Activated CD4-positive, alpha-beta T cell treated with anti-CD3 and anti-CD28 coated beads for 36 hours (primary cell): ENCODE measurements at regions of chr20 and their contacts with region 1.

Region 1: DNA sequence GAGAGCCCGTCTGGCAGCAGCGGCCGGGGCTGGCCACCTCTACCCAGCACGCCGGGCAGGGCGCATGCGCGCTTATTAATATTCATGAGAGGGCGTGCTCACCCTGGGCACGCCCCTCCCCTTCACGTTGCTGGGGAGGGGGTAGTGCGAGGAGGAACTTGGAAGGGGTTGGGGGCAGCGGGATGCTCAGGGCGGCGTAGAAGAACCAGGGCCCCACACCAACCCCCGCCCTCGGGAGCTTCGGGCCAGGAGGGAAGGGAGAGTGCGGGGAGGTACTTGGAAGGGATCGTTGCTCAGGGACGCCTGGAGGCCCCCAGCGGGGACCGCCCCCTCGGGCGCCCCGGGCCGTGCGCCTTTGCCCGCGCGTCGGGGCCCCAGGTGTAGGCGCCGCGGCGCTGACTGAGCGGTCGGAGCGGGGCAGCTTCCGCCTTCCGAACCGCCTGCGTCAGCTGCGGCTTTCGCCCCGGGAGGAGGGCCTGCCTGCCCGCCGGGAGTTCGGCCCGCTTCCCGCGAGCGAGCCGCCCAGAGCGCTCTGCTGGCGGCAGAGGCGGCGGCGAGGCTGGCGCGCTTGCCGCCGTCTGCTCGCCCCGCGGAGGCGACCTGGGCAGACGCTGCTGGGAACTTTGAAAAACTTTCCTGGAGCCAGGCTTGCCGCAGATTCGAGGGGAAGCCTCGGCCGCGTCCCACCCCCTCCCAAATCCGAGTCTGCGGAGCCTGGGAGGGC is at the start of gene JAG1:
- DNase-seq: peak; percentile 86
- ATAC-seq: peak; percentile 78
- H3K4me3 Mint-ChIP-seq: peak within 1 kb of the TSS; percentile 71
- H3K27ac Mint-ChIP-seq: no peak within 1 kb of the TSS
- H3K4me1 Mint-ChIP-seq: peaks cover 21% of the 10 kb centered on the region
- H3K27me3 Mint-ChIP-seq: peaks cover 61% of the 10 kb centered on the region
- total RNA-seq, gene JAG1: 0.30 to 0.44 TPM

Region 2: GRCh38 chr20:10434832-10435812 is 239.0 kb before region 1 on chr20 and contains the start of gene SLX4IP:
- CTCF ChIA-PET with region 1: interaction called, 4 read pairs
- POLR2A ChIA-PET with region 1: no interaction called
- intact Hi-C with region 1: loop called (anchors 1 to 2 kb)
- DNase-seq: peak; percentile 88
- ATAC-seq: peak; percentile 68
- H3K4me3 Mint-ChIP-seq: peak within 1 kb of the TSS; percentile 78
- H3K27ac Mint-ChIP-seq: peak within 1 kb of the TSS; percentile 87
- H3K4me1 Mint-ChIP-seq: peaks cover 39% of the 10 kb centered on the region
- H3K27me3 Mint-ChIP-seq: no peaks in the 10 kb centered on the region
- total RNA-seq, gene SLX4IP: 7.4 to 7.8 TPM

Region 3: GRCh38 chr20:10553326-10553984 is 120.7 kb before region 1 on chr20:
- CTCF ChIA-PET with region 1: no interaction called
- POLR2A ChIA-PET with region 1: no interaction called
- intact Hi-C with region 1: loop called (anchors 2 to 5 kb)
- DNase-seq: peak; percentile 70
- ATAC-seq: peak; percentile 45
- H3K4me3 Mint-ChIP-seq: no peak overlapping the region
- H3K27ac Mint-ChIP-seq: no peak overlapping the region
- H3K4me1 Mint-ChIP-seq: peaks cover 38% of the 10 kb centered on the region
- H3K27me3 Mint-ChIP-seq: no peaks in the 10 kb centered on the region

Region 4: DNA sequence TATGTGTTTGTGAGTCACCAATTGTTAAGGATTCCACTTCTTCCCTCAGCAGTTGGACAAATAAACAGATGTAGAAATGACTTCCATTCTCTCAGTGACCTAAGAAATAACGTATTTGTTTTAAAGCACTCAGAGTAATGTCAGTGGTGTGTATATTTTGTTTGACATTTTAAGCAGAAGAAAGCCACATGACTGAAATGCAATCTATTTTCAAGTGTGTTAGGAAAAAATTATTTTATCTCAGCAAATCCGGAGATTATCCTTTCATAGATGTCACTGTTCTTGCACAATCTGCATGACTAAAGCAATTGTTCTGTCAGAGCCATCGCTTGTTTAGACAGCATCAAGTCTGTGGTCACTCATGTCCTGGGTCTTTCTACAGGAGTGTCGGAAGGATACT is 77.4 kb before region 1 on chr20:
- CTCF ChIA-PET with region 1: interaction called, 3 read pairs
- POLR2A ChIA-PET with region 1: interaction called, 3 read pairs
- intact Hi-C with region 1: loop called in 1 of 2 experiments (anchors 1 kb)
- DNase-seq: no peak
- ATAC-seq: no peak
- H3K4me3 Mint-ChIP-seq: no peak overlapping the region
- H3K27ac Mint-ChIP-seq: no peak overlapping the region
- H3K4me1 Mint-ChIP-seq: peaks cover 17% of the 10 kb centered on the region
- H3K27me3 Mint-ChIP-seq: no peaks in the 10 kb centered on the region

Region 5: DNA sequence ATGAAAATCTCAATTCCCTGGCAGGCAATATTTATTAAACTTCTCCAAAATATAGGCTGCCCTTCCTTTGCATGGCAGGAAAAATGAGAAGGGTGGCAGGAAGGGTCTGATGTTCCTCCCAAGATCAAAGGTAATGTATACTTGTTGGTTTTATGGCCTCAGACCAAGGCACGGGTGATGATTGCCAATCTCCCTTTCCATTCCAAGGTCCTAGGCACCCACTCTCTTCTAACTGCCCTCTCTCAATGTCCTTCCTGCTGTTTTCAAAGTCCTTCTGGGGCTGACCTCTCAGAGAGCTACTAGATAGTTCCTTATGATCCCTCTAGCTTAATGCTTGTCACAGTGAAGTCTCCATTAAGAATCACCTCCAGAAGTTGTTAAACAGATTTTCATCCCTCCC is 15.2 kb after region 1 on chr20:
- CTCF ChIA-PET with region 1: no interaction called
- POLR2A ChIA-PET with region 1: no interaction called
- intact Hi-C with region 1: no loop called
- DNase-seq: no peak
- ATAC-seq: no peak
- H3K4me3 Mint-ChIP-seq: no peak overlapping the region
- H3K27ac Mint-ChIP-seq: no peak overlapping the region
- H3K4me1 Mint-ChIP-seq: no peaks in the 10 kb centered on the region
- H3K27me3 Mint-ChIP-seq: peaks cover 10% of the 10 kb centered on the region

Region 6: GRCh38 chr20:11544029-11544678 is 870.0 kb after region 1 on chr20:
- CTCF ChIA-PET with region 1: no interaction called
- POLR2A ChIA-PET with region 1: no interaction called
- intact Hi-C with region 1: loop called in 1 of 2 experiments (anchors 5 kb)
- DNase-seq: peak; percentile 25
- ATAC-seq: no peak
- H3K4me3 Mint-ChIP-seq: no peak overlapping the region
- H3K27ac Mint-ChIP-seq: no peak overlapping the region
- H3K4me1 Mint-ChIP-seq: no peaks in the 10 kb centered on the region
- H3K27me3 Mint-ChIP-seq: no peaks in the 10 kb centered on the region